Psoas muscle (tissue), 8 donors: ENCODE measurements at regions of chr12 and their contacts with region 1.

Region 1: GRCh38 chr12:49776413-49776812 is 35.1 kb downstream of the TMBIM6 start:
- DNase-seq: peak; percentile 72 to 85
- ATAC-seq: peak; percentile 90 to 97 (median 94)
- H3K4me3 ChIP-seq: peak overlapping the region; percentile 14
- H3K27ac ChIP-seq: no peak overlapping the region
- H3K4me1 ChIP-seq: peaks cover 5% of the 10 kb centered on the region
- H3K27me3 ChIP-seq: no peaks in the 10 kb centered on the region
- CTCF ChIP-seq: peak; percentile 84

Region 2: GRCh38 chr12:49787672-49788071 is 11.3 kb after region 1 on chr12:
- intact Hi-C with region 1: loop called in 1 of 2 experiments (anchors 1 kb)
- DNase-seq: no peak
- ATAC-seq: no peak
- H3K4me3 ChIP-seq: no peak overlapping the region
- H3K27ac ChIP-seq: no peak overlapping the region
- H3K4me1 ChIP-seq: peaks cover 26% of the 10 kb centered on the region
- H3K27me3 ChIP-seq: no peaks in the 10 kb centered on the region
- CTCF ChIP-seq: no peak

Region 3: GRCh38 chr12:49842519-49843352 is 66.3 kb after region 1 on chr12 and contains the start of gene BCDIN3D:
- intact Hi-C with region 1: loop called (anchors 2 kb)
- DNase-seq: peak; percentile 93 to 96
- ATAC-seq: peak; percentile 96 to 99 (median 98)
- H3K4me3 ChIP-seq: peak within 1 kb of the TSS; percentile 84
- H3K27ac ChIP-seq: peak within 1 kb of the TSS; percentile 96
- H3K4me1 ChIP-seq: peaks cover 17% of the 10 kb centered on the region
- H3K27me3 ChIP-seq: peaks cover 0 to 7% (median 3%) of the 10 kb centered on the region in 3 donors
- CTCF ChIP-seq: no peak
- total RNA-seq, gene BCDIN3D: 1.6 to 3.5 (median 3.3) TPM